B cell (primary cell): ENCODE measurements at regions of chr6 and their contacts with region 1.

Region 1: DNA sequence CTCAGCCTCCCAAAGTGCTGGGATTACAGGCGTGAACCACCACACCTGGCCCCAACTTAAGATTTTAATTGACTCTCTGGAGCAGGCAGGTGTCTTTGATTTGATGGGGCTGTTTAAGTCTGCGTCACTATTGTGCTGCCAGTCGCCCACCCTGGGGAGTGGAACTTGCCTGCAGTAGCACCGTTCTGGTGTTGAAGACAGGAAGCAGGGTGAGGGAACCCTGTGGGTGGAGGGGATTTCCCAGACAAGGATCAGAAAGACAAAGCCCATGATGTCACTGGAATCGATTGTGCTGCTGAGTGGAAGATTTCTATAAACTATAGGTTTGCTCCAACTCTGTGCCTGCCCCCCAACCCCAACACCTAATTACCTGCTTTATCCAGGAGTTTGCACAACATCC is 11.0 kb downstream of the ALDH8A1 start:
- DNase-seq: peak; percentile 38
- ATAC-seq: no peak
- H3K4me3 ChIP-seq: no peak overlapping the region
- H3K4me3 Mint-ChIP-seq: no peak overlapping the region
- H3K27ac ChIP-seq: no peak overlapping the region
- H3K27ac Mint-ChIP-seq: no peak overlapping the region
- H3K4me1 ChIP-seq: peaks cover 5 to 6% of the 10 kb centered on the region in 2 donors
- H3K4me1 Mint-ChIP-seq: no peaks in the 10 kb centered on the region
- H3K27me3 ChIP-seq: no peaks in the 10 kb centered on the region
- H3K27me3 Mint-ChIP-seq: no peaks in the 10 kb centered on the region
- CTCF ChIP-seq: no peak

Region 2: DNA sequence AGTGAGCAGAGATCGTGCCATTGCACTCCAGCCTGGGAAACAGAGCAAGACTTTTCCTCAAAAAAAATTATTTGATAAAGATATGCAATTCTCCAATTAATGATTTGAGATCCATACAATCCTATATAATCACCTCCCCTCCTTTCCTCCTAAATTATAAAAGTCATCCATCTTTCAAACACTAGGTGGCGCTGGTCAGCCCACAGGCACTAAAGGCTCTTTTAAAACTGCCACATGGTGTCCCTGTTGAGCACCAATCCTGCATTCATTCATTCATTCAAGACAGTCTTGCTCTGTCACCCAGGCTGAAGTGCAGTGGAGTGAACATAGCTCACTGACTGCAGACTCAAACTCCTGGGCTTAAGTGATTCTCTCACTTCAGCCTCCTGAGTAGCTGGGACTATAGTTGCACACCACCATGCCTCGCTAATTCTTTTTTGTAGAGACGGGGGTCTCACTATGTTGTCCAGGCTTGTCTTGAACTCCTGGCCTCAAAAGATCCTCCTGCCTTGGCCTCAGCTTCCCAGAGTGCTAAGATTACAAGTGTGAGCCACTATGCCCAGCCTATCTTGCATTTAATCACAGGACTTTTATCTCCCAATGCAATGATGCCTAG is 827.7 kb before region 1 on chr6:
- CTCF ChIA-PET with region 1: interaction called, 13 read pairs
- POLR2A ChIA-PET with region 1: no interaction called
- intact Hi-C with region 1: no loop called
- DNase-seq: peak; percentile 69
- ATAC-seq: peak; percentile 53
- H3K4me3 ChIP-seq: no peak overlapping the region
- H3K4me3 Mint-ChIP-seq: no peak overlapping the region
- H3K27ac ChIP-seq: no peak overlapping the region
- H3K27ac Mint-ChIP-seq: no peak overlapping the region
- H3K4me1 ChIP-seq: no peaks in the 10 kb centered on the region
- H3K4me1 Mint-ChIP-seq: no peaks in the 10 kb centered on the region
- H3K27me3 ChIP-seq: peaks cover 0 to 11% (median 0%) of the 10 kb centered on the region in 4 experiments
- H3K27me3 Mint-ChIP-seq: peaks cover 19% of the 10 kb centered on the region
- CTCF ChIP-seq: peak; percentile 88

Region 3: GRCh38 chr6:134152767-134153485 is 786.0 kb before region 1 on chr6:
- CTCF ChIA-PET with region 1: interaction called, 59 read pairs
- POLR2A ChIA-PET with region 1: no interaction called
- intact Hi-C with region 1: loop called (anchors 1 kb)
- DNase-seq: no peak
- ATAC-seq: no peak
- H3K4me3 ChIP-seq: no peak overlapping the region
- H3K4me3 Mint-ChIP-seq: no peak overlapping the region
- H3K27ac ChIP-seq: no peak overlapping the region
- H3K27ac Mint-ChIP-seq: no peak overlapping the region
- H3K4me1 ChIP-seq: no peaks in the 10 kb centered on the region
- H3K4me1 Mint-ChIP-seq: no peaks in the 10 kb centered on the region
- H3K27me3 ChIP-seq: no peaks in the 10 kb centered on the region
- H3K27me3 Mint-ChIP-seq: no peaks in the 10 kb centered on the region
- CTCF ChIP-seq: no peak

Region 4: GRCh38 chr6:134166511-134167261 is 772.2 kb before region 1 on chr6:
- CTCF ChIA-PET with region 1: interaction called, 17 read pairs
- POLR2A ChIA-PET with region 1: no interaction called
- intact Hi-C with region 1: no loop called
- DNase-seq: no peak
- ATAC-seq: no peak
- H3K4me3 ChIP-seq: no peak overlapping the region
- H3K4me3 Mint-ChIP-seq: no peak overlapping the region
- H3K27ac ChIP-seq: no peak overlapping the region
- H3K27ac Mint-ChIP-seq: no peak overlapping the region
- H3K4me1 ChIP-seq: no peaks in the 10 kb centered on the region
- H3K4me1 Mint-ChIP-seq: peaks cover 5% of the 10 kb centered on the region
- H3K27me3 ChIP-seq: no peaks in the 10 kb centered on the region
- H3K27me3 Mint-ChIP-seq: no peaks in the 10 kb centered on the region
- CTCF ChIP-seq: no peak

Region 5: DNA sequence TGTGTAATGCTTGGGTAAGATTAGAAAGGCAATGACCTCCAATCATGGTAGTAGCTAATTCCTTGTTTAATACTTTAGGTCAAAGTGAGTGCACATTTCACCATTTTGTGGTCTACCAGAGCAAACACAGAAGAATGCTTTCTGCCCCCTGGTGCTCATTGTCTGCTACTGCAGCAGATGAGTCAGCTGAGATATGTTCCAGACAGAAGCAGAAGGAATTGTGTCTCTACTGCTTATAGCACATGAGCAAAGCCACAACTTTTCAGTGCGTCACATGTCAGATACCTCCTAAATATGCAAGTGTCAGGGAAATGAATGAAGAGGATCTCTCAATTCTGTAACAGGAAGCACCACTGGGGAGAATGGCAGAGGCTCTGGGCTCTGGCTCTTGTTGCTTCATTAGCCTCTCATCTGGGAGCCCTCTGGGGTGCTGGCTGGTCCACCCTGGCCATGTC is 297.9 kb before region 1 on chr6:
- CTCF ChIA-PET with region 1: interaction called, 18 read pairs
- POLR2A ChIA-PET with region 1: no interaction called
- intact Hi-C with region 1: loop called (anchors 1 kb)
- DNase-seq: peak; percentile 86
- ATAC-seq: peak; percentile 92
- H3K4me3 ChIP-seq: no peak overlapping the region
- H3K4me3 Mint-ChIP-seq: no peak overlapping the region
- H3K27ac ChIP-seq: no peak overlapping the region
- H3K27ac Mint-ChIP-seq: no peak overlapping the region
- H3K4me1 ChIP-seq: peaks cover 7 to 8% of the 10 kb centered on the region in 2 donors
- H3K4me1 Mint-ChIP-seq: peaks cover 10% of the 10 kb centered on the region
- H3K27me3 ChIP-seq: no peaks in the 10 kb centered on the region
- H3K27me3 Mint-ChIP-seq: no peaks in the 10 kb centered on the region
- CTCF ChIP-seq: peak; percentile 96

Region 6: DNA sequence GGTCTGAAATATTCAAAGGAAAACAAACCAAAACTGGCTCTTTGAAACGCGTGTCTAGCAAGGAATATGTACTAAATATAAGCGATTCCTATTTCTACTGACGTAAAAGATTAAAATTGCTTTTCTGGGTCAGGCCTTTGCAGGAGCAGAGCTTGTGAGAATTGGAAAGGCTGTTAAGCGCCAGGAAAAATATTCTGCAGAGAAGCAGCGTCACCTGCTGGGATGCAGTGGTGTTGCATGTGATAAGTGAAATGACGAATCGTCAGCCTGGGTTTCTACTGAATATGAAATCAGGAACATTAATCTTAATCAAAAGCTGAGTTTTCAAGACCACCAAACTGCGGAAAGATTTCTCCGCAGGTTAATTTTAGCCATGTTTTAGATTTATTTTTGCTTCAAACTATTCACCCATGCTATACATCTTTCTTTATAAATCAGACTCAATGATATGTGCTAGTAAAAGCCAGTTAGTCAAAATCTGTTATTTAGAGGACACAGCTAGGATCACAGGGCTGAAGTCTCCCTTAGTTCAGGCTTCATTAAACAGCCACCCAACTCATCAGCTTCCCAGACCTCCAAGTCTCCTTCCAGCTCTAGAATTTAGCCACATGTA is 56.4 kb before region 1 on chr6:
- CTCF ChIA-PET with region 1: interaction called, 10 read pairs
- POLR2A ChIA-PET with region 1: no interaction called
- intact Hi-C with region 1: no loop called
- DNase-seq: peak; percentile 65
- ATAC-seq: peak; percentile 54
- H3K4me3 ChIP-seq: no peak overlapping the region
- H3K4me3 Mint-ChIP-seq: no peak overlapping the region
- H3K27ac ChIP-seq: no peak overlapping the region
- H3K27ac Mint-ChIP-seq: no peak overlapping the region
- H3K4me1 ChIP-seq: peaks cover 0 to 3% of the 10 kb centered on the region in 2 donors
- H3K4me1 Mint-ChIP-seq: no peaks in the 10 kb centered on the region
- H3K27me3 ChIP-seq: peaks cover 0 to 5% (median 2%) of the 10 kb centered on the region in 4 experiments
- H3K27me3 Mint-ChIP-seq: peaks cover 21% of the 10 kb centered on the region
- CTCF ChIP-seq: peak; percentile 87

Region 7: GRCh38 chr6:134949927-134950326 is 11.0 kb after region 1 on chr6 and contains the start of gene ALDH8A1:
- CTCF ChIA-PET with region 1: interaction called, 11 read pairs
- POLR2A ChIA-PET with region 1: no interaction called
- intact Hi-C with region 1: no loop called
- DNase-seq: no peak
- ATAC-seq: no peak
- H3K4me3 ChIP-seq: no peak within 1 kb of the TSS
- H3K4me3 Mint-ChIP-seq: no peak within 1 kb of the TSS
- H3K27ac ChIP-seq: no peak within 1 kb of the TSS
- H3K27ac Mint-ChIP-seq: no peak within 1 kb of the TSS
- H3K4me1 ChIP-seq: no peaks in the 10 kb centered on the region
- H3K4me1 Mint-ChIP-seq: no peaks in the 10 kb centered on the region
- H3K27me3 ChIP-seq: no peaks in the 10 kb centered on the region
- H3K27me3 Mint-ChIP-seq: no peaks in the 10 kb centered on the region
- CTCF ChIP-seq: no peak
- total RNA-seq, gene ALDH8A1: 0.49 and 1.6 TPM in 2 replicates